ENCODE measurements at regions of chr2 and their contacts with region 1.

Region 1: DNA sequence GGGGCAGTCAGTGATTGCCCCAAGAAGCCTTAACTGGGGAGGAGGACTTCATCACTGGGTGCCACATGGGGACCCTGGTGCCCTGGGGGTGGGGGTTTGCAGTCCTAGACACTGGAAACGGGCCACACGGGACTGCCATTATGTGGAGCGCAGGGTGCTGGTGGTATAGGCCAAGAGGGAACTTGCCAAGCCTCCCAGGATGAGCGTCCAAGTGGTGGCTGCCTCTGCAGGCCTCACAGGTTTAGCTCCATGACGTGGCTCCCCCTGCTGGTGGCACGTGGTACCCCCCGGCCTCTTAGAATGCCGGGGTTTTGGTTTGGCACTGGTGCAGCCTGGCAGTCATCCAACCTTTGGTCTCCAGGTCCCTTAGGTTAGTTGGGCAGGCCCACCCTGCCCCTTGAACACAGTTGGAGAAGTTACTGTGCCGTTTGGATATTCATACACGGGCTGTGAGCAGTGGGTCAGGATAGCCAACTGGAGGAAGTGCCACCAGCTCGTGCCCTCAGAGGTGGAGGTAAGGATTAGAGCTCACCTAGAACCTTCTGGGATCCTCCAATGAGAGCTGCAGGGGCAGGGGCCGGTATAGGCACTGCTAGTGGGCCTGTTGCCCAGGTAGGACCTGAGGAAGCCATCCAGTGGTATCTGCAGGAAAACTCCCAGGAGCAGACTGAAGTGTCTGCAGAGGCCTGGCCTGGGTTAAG is 5.6 kb downstream of the PTMA start:
- DNase-seq: peak; percentile 76
- CTCF ChIP-seq: peak; percentile 95

Region 2: DNA sequence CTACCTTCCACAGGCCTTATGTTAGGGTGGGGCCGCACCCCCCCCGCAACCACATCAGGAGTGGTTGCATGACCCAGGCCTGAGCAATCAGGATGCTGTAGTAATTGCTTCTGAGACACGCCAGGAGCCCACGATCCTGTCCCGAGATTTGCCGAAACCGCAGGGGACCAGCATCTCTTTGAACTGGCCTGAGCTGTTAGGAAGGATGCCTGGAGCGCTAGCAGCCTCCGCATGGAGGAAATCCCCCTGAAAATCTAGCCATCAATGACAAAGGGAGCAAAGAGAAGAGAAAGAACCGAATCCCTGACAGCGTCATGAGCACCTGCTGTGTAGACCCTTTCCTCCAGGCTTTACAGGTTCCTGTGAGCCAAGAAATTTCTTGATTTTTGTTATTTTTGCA is 129.9 kb before region 1 on chr2:
- CTCF ChIA-PET with region 1: no interaction called
- POLR2A ChIA-PET with region 1: no interaction called
- DNase-seq: no peak
- CTCF ChIP-seq: no peak

Region 3: GRCh38 chr2:231612179-231613053 is 101.5 kb before region 1 on chr2:
- CTCF ChIA-PET with region 1: interaction called, 210 read pairs
- POLR2A ChIA-PET with region 1: interaction called, 31 read pairs
- DNase-seq: peak; percentile 89
- CTCF ChIP-seq: peak; percentile 85

Region 4: GRCh38 chr2:231648587-231649174 is 65.2 kb before region 1 on chr2:
- CTCF ChIA-PET with region 1: interaction called, 67 read pairs
- POLR2A ChIA-PET with region 1: no interaction called
- DNase-seq: peak; percentile 75
- CTCF ChIP-seq: peak; percentile 79

Region 5: GRCh38 chr2:231674587-231675338 is 39.1 kb before region 1 on chr2:
- CTCF ChIA-PET with region 1: interaction called, 531 read pairs
- POLR2A ChIA-PET with region 1: interaction called, 34 read pairs
- DNase-seq: peak; percentile 72
- CTCF ChIP-seq: peak; percentile 92

Region 6: DNA sequence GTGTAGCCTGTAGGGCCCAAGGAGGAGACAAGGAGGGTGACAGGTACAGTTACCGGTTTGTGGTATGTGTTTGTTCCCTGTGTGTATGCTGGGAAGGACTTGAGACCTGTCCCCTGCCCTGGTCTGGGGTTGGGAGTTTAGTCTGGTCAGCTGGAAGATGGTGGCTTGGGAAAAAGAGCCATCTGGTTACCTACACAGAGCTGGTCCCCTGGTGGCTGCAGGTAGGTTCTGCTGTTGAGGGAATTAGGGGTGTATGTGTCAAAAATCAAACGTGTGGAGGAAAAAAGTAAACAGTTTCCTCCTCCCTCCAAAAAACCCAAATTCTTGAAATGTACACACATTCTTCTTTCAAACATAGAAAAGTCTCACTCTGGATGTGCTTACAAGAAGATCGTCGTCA is 18.7 kb after region 1 on chr2:
- CTCF ChIA-PET with region 1: interaction called, 33 read pairs
- POLR2A ChIA-PET with region 1: no interaction called
- DNase-seq: no peak
- CTCF ChIP-seq: no peak

Region 7: GRCh38 chr2:232075080-232075479 is 361.2 kb after region 1 on chr2:
- CTCF ChIA-PET with region 1: no interaction called
- POLR2A ChIA-PET with region 1: no interaction called
- DNase-seq: no peak
- CTCF ChIP-seq: no peak